ENCODE measurements at regions of chr6 and their contacts with region 1.

Region 1: GRCh38 chr6:328136-328670 is 35.9 kb downstream of the DUSP22 start:
- DNase-seq: peak; percentile 100
- ATAC-seq: peak; percentile 76
- H3K4me3 ChIP-seq: peak overlapping the region; percentile 37
- H3K27ac ChIP-seq: peak overlapping the region; percentile 97
- H3K4me1 ChIP-seq: peaks cover 85% of the 10 kb centered on the region
- H3K27me3 ChIP-seq: no peaks in the 10 kb centered on the region
- CTCF ChIP-seq: no peak
- EP300 ChIP-seq: peak; percentile 87 to 96
- POLR2A ChIP-seq: no peak
- RAD21 ChIP-seq: 0 out of 2 replicates have a peak, but pooled peaks have one; percentile 32

Region 2: DNA sequence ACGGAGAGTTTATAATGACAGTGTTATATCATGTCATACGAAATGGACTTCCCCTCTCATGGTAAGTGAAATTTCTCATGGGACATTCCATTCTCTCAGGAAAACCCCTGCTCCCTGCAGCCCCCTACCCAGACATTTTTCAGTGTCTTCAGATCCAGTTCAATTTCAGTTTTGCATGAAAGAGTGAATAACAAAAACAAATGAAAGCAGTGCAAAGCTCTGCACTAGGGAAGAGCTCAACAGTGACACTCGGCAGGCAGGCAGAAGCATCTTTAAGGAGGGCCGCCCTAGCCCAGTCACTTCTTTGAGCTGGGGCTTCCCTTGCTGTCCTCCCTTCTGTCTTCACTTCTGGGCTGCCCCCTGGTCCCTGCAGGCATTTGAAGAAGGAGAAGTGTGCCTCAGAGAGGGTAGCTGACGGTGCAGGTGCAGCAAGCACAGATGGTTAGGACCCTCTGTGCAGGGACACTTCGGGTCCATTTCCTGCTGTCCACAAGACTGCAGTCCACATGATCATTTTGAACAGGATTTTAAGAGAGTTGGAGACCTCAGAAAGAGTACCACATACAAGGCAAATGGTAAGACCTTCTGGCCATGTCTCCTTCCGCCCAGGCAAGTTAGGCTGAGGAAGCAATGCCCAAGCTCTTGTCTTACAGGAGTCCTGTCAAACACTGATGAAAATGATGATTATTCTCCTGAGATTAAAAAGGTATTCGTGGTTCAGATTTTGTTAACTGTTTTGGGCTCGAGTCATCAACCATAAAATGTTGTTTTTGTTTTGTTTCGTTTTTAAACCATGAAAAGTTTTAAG is 41.3 kb before region 1 on chr6:
- CTCF ChIA-PET with region 1: interaction called, 6 read pairs
- POLR2A ChIA-PET with region 1: interaction called, 11 read pairs
- RAD21 ChIA-PET with region 1: interaction called, 17 read pairs
- SMC1A ChIA-PET with region 1: interaction called, 17 read pairs
- in situ Hi-C with region 1: no loop called
- intact Hi-C with region 1: loop called (anchors 1 kb)
- DNase-seq: no peak
- ATAC-seq: peak; percentile 48
- H3K4me3 ChIP-seq: peak overlapping the region; percentile 2; the same call in 1 of the 2 replicates
- H3K27ac ChIP-seq: peak overlapping the region; percentile 53
- H3K4me1 ChIP-seq: peaks cover 54% of the 10 kb centered on the region
- H3K27me3 ChIP-seq: no peaks in the 10 kb centered on the region
- CTCF ChIP-seq: no peak
- EP300 ChIP-seq: 0 out of 4 replicates have a peak, but pooled peaks have one; percentile 42 to 61
- POLR2A ChIP-seq: no peak
- RAD21 ChIP-seq: 0 out of 2 replicates have a peak, but pooled peaks have one; percentile 7

Region 3: GRCh38 chr6:305371-306206 is 22.6 kb before region 1 on chr6:
- CTCF ChIA-PET with region 1: interaction called, 83 read pairs
- POLR2A ChIA-PET with region 1: interaction called, 227 read pairs
- RAD21 ChIA-PET with region 1: interaction called, 170 read pairs
- SMC1A ChIA-PET with region 1: interaction called, 168 read pairs
- in situ Hi-C with region 1: no loop called
- intact Hi-C with region 1: no loop called
- DNase-seq: peak; percentile 97
- ATAC-seq: peak; percentile 84
- H3K4me3 ChIP-seq: peak overlapping the region; percentile 26; the same call in 1 of the 2 replicates
- H3K27ac ChIP-seq: peak overlapping the region; percentile 100
- H3K4me1 ChIP-seq: peaks cover 77% of the 10 kb centered on the region
- H3K27me3 ChIP-seq: no peaks in the 10 kb centered on the region
- CTCF ChIP-seq: no peak
- EP300 ChIP-seq: peak; percentile 100
- POLR2A ChIP-seq: no peak
- RAD21 ChIP-seq: peak; percentile 30; the same call in 1 of the 2 replicates

Region 4: GRCh38 chr6:347232-347631 is 19.0 kb after region 1 on chr6:
- CTCF ChIA-PET with region 1: interaction called, 34 read pairs
- POLR2A ChIA-PET with region 1: interaction called, 150 read pairs
- RAD21 ChIA-PET with region 1: interaction called, 256 read pairs
- SMC1A ChIA-PET with region 1: interaction called, 707 read pairs
- in situ Hi-C with region 1: no loop called
- intact Hi-C with region 1: loop called (anchors 1 kb)
- DNase-seq: no peak
- ATAC-seq: peak; percentile 68
- H3K4me3 ChIP-seq: peak overlapping the region; percentile 24; the same call in 1 of the 2 replicates
- H3K27ac ChIP-seq: peak overlapping the region; percentile 84
- H3K4me1 ChIP-seq: peaks cover 64% of the 10 kb centered on the region
- H3K27me3 ChIP-seq: no peaks in the 10 kb centered on the region
- CTCF ChIP-seq: peak in 1 of 3 experiments; percentile 9; a peak in 1 of 6 replicates
- EP300 ChIP-seq: no peak; a peak in 1 of 4 replicates
- POLR2A ChIP-seq: no peak
- RAD21 ChIP-seq: peak; percentile 58

Region 5: DNA sequence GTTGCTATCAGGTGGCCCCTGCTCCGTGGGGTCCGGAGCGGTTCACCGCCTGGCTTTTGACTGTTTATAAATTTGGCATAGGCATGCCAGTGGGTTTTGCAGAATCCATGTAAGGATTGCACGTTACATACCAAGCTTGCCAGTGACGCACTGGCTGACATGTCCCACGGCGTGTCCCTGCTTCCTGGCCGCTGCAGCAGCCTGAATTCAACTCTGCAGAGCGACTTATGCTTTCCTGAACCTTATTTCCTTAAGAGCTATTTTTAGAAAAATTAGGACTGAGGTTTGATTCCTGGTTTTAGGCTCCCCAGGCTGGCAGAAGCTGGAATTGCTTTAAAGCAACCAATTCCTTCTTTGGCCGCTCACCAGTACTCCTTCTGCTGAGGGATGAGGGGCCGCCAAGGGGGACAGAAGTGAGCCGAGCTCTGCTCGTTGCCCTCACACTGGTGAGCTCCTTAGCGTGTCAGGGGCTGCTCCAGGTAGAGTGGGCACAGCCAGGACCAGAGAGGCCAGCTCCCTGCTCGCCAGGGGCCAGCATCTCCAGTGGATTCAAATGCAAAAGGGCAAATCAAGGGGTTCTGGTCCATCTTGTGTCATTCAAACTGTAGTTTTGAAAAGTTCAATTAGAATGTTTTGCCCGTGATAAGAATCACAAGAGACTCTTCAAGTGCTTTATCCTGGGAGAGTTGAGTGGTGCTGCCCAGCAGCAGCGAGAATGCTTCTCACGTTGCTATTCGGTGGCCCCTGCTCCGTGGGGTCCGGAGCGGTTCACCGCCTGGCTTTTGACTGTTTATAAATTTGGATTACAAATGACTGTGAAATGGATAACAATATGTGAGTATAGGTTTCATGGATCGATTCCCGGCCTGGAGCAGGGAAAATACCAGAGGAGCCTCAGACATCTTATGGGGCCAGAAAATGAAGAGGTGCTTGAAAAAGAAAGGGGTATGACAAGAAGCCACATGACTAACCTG is 45.8 kb after region 1 on chr6:
- CTCF ChIA-PET with region 1: interaction called, 3 read pairs
- POLR2A ChIA-PET with region 1: interaction called, 3 read pairs
- RAD21 ChIA-PET with region 1: interaction called, 4 read pairs
- SMC1A ChIA-PET with region 1: interaction called, 15 read pairs
- in situ Hi-C with region 1: no loop called
- intact Hi-C with region 1: no loop called
- DNase-seq: no peak
- ATAC-seq: no peak
- H3K4me3 ChIP-seq: no peak overlapping the region
- H3K27ac ChIP-seq: no peak overlapping the region
- H3K4me1 ChIP-seq: peaks cover 35% of the 10 kb centered on the region
- H3K27me3 ChIP-seq: no peaks in the 10 kb centered on the region
- CTCF ChIP-seq: no peak
- EP300 ChIP-seq: no peak
- POLR2A ChIP-seq: no peak
- RAD21 ChIP-seq: no peak

Measured in GM12878 (cell line).